A673 (cell line): ENCODE measurements at regions of chr5 and their contacts with region 1.

Region 1: GRCh38 chr5:106465437-106465836 is 1205.3 kb downstream of the EFNA5 start:
- DNase-seq: no peak
- H3K4me3 ChIP-seq: no peak overlapping the region
- H3K27ac ChIP-seq: no peak overlapping the region
- H3K4me1 ChIP-seq: peaks cover 4% of the 10 kb centered on the region
- H3K27me3 ChIP-seq: no peaks in the 10 kb centered on the region
- CTCF ChIP-seq: no peak

Region 2: GRCh38 chr5:106730912-106731311 is 265.5 kb after region 1 on chr5:
- CTCF ChIA-PET with region 1: no interaction called
- POLR2A ChIA-PET with region 1: no interaction called
- intact Hi-C with region 1: loop called (anchors 10 kb)
- DNase-seq: no peak
- H3K4me3 ChIP-seq: no peak overlapping the region
- H3K27ac ChIP-seq: no peak overlapping the region
- H3K4me1 ChIP-seq: no peaks in the 10 kb centered on the region
- H3K27me3 ChIP-seq: no peaks in the 10 kb centered on the region
- CTCF ChIP-seq: no peak